MCF 10A (cell line): ENCODE measurements at regions of chr12 and their contacts with region 1.

Region 1: GRCh38 chr12:91818227-91819131 is 327.2 kb downstream of the BTG1 start:
- DNase-seq: peak; percentile 18
- H3K4me3 Mint-ChIP-seq: peak overlapping the region; percentile 8
- H3K27ac Mint-ChIP-seq: peak overlapping the region; percentile 42
- H3K4me1 Mint-ChIP-seq: peaks cover 31% of the 10 kb centered on the region
- H3K27me3 Mint-ChIP-seq: no peaks in the 10 kb centered on the region
- CTCF ChIP-seq: no peak

Region 2: DNA sequence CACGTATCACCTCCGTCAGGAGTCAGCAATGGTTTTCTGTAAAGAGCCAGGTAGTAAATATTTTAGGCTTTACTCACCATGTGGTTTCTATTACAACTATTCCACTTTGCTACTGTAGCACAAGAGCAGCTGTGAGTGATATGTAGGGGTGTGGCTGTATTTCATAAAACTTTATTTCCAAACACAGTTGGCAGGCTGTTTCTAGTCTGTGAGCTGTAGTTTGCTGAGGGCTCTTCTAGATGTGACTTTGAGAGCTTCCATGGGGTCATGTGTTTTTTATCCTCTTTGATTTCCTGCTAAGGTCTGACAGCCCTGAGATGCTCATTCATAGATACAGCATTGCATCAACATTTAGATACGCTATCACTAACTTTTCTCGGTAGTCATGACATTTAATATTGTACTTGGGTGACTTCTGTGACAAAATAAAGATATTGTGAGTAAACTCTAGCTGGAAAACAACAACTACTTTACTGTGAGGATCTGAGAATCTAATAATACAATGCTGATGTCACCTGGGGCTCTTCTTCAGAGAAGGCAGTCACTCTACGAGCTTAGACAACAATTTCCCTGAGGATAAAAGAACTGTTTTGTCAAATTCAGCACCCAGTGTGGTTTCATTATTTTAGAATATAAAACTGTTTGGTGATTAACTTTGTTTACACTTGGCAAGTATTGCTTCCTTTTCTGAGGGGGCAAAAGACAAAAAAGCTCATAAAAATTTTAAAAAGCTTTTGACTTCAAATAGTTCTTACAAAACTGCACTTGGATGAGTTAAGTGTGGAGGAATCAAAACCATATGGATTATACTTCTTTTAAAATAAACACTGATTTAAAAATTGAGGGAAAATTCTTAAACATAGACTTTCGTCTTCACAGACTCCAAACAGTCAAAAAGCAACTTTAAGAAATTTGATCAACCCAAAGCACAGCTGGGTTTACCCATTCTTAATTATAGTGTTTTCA is 404.6 kb before region 1 on chr12:
- CTCF ChIA-PET with region 1: no interaction called
- POLR2A ChIA-PET with region 1: interaction called, 31 read pairs
- intact Hi-C with region 1: no loop called
- DNase-seq: peak; percentile 85
- H3K4me3 Mint-ChIP-seq: no peak overlapping the region
- H3K27ac Mint-ChIP-seq: peak overlapping the region; percentile 66
- H3K4me1 Mint-ChIP-seq: peaks cover 16% of the 10 kb centered on the region
- H3K27me3 Mint-ChIP-seq: no peaks in the 10 kb centered on the region
- CTCF ChIP-seq: no peak

Region 3: DNA sequence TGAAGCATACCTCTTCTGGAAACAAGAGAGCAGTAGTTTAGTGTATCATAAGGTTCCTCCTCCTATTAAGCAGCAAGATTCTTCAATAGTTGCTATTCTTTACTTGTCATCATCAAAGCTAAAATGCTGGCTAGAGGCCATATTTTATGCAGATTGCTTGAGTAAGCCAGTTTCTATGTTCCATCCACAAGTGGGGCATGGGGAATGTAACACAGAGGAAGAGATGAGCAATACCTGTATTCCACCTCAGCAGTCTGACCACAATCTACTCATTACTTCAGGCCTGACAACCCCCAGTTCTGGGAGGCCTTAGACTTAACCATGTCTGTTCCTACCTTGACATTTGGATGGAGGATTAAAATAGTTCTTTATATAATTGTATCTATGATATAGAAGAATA is 96.4 kb before region 1 on chr12:
- CTCF ChIA-PET with region 1: interaction called, 3 read pairs
- POLR2A ChIA-PET with region 1: interaction called, 39 read pairs
- intact Hi-C with region 1: no loop called
- DNase-seq: peak; percentile 50
- H3K4me3 Mint-ChIP-seq: no peak overlapping the region
- H3K27ac Mint-ChIP-seq: peak overlapping the region; percentile 42
- H3K4me1 Mint-ChIP-seq: peaks cover 42% of the 10 kb centered on the region
- H3K27me3 Mint-ChIP-seq: no peaks in the 10 kb centered on the region
- CTCF ChIP-seq: no peak

Region 4: GRCh38 chr12:91833780-91834359 is 15.4 kb after region 1 on chr12:
- CTCF ChIA-PET with region 1: no interaction called
- POLR2A ChIA-PET with region 1: interaction called, 10 read pairs
- intact Hi-C with region 1: no loop called
- DNase-seq: no peak
- H3K4me3 Mint-ChIP-seq: no peak overlapping the region
- H3K27ac Mint-ChIP-seq: no peak overlapping the region
- H3K4me1 Mint-ChIP-seq: no peaks in the 10 kb centered on the region
- H3K27me3 Mint-ChIP-seq: no peaks in the 10 kb centered on the region
- CTCF ChIP-seq: no peak

Region 5: GRCh38 chr12:92007787-92008186 is 189.3 kb after region 1 on chr12:
- CTCF ChIA-PET with region 1: no interaction called
- POLR2A ChIA-PET with region 1: no interaction called
- intact Hi-C with region 1: no loop called
- DNase-seq: no peak
- H3K4me3 Mint-ChIP-seq: no peak overlapping the region
- H3K27ac Mint-ChIP-seq: no peak overlapping the region
- H3K4me1 Mint-ChIP-seq: no peaks in the 10 kb centered on the region
- H3K27me3 Mint-ChIP-seq: no peaks in the 10 kb centered on the region
- CTCF ChIP-seq: peak; percentile 6

Region 6: GRCh38 chr12:92019491-92020277 is 201.2 kb after region 1 on chr12:
- CTCF ChIA-PET with region 1: no interaction called
- POLR2A ChIA-PET with region 1: interaction called, 10 read pairs
- intact Hi-C with region 1: no loop called
- DNase-seq: no peak
- H3K4me3 Mint-ChIP-seq: no peak overlapping the region
- H3K27ac Mint-ChIP-seq: no peak overlapping the region
- H3K4me1 Mint-ChIP-seq: no peaks in the 10 kb centered on the region
- H3K27me3 Mint-ChIP-seq: no peaks in the 10 kb centered on the region
- CTCF ChIP-seq: no peak

Region 7: GRCh38 chr12:92078167-92079053 is 259.9 kb after region 1 on chr12:
- CTCF ChIA-PET with region 1: no interaction called
- POLR2A ChIA-PET with region 1: interaction called, 10 read pairs
- intact Hi-C with region 1: no loop called
- DNase-seq: peak; percentile 96
- H3K4me3 Mint-ChIP-seq: peak overlapping the region; percentile 26
- H3K27ac Mint-ChIP-seq: peak overlapping the region; percentile 95
- H3K4me1 Mint-ChIP-seq: peaks cover 60% of the 10 kb centered on the region
- H3K27me3 Mint-ChIP-seq: no peaks in the 10 kb centered on the region
- CTCF ChIP-seq: no peak